HEK293 (cell line): ENCODE measurements at regions of chr2 and their contacts with region 1.

Region 1: DNA sequence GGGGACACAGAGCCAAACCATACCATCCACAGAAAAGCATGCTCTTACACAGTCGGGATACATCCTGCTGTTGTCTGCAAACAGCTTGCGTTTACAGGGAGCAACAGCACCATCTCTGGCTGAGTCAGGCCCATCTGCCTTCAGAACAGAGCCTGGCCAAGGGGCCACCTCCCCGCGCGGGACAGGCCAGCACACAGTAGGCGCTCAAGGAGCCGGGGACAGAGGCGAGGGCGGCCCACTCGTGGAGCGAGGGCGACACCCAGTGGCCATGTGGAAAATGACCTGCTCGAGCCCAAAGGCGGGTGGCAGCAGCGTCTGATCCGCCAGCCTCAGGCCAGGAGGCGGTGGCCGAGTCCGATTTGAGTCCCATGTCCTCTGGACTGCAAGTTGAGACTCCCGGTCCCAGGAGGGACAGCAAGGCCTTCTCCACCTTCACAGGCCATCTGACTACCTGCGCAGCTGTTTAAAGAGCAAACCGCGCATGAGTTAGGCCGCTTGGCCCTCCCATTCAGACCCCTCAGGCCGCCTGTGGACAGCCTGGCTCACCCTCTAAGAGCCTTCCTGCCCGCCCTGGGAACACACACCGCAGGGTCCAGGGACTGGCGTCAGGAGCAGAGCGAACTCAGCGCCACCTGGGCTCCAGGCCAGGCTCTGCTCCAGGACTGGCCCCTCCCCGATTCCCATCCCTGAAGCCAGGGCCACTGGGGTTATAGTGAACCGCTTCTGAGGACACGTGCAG is 38.3 kb downstream of the TTC32 start:
- H3K4me3 ChIP-seq: no peak overlapping the region
- H3K27ac ChIP-seq: no peak overlapping the region
- H3K4me1 ChIP-seq: no peaks in the 10 kb centered on the region
- CTCF ChIP-seq: peak; percentile 83

Region 2: GRCh38 chr2:19369341-19369955 is 494.0 kb before region 1 on chr2:
- CTCF ChIA-PET with region 1: interaction called, 13 read pairs
- POLR2A ChIA-PET with region 1: no interaction called
- H3K4me3 ChIP-seq: no peak overlapping the region
- H3K27ac ChIP-seq: no peak overlapping the region
- H3K4me1 ChIP-seq: no peaks in the 10 kb centered on the region
- CTCF ChIP-seq: peak; percentile 47; the same call in 1 of the 2 replicates

Region 3: GRCh38 chr2:19769513-19769912 is 94.0 kb before region 1 on chr2:
- CTCF ChIA-PET with region 1: interaction called, 10 read pairs
- POLR2A ChIA-PET with region 1: no interaction called
- H3K4me3 ChIP-seq: no peak overlapping the region
- H3K27ac ChIP-seq: no peak overlapping the region
- H3K4me1 ChIP-seq: peaks cover 4% of the 10 kb centered on the region
- CTCF ChIP-seq: no peak